ENCODE measurements at regions of chr3 and their contacts with region 1.

Region 1: GRCh38 chr3:115099986-115100571 is 47.0 kb downstream of the ZBTB20 start:
- DNase-seq: no peak
- H3K4me3 ChIP-seq: no peak overlapping the region
- H3K27ac ChIP-seq: no peak overlapping the region
- H3K4me1 ChIP-seq: peaks cover 0 to 4% (median 0%) of the 10 kb centered on the region in 4 experiments; a peak in 2 of 7 replicates
- H3K27me3 ChIP-seq: no peaks in the 10 kb centered on the region
- CTCF ChIP-seq: no peak
- EP300 ChIP-seq: no peak
- POLR2A ChIP-seq: no peak
- RAD21 ChIP-seq: no peak

Region 2: GRCh38 chr3:115085197-115085865 is 14.7 kb before region 1 on chr3:
- CTCF ChIA-PET with region 1: interaction called, 13 read pairs
- POLR2A ChIA-PET with region 1: no interaction called
- DNase-seq: no peak
- H3K4me3 ChIP-seq: no peak overlapping the region
- H3K27ac ChIP-seq: no peak overlapping the region
- H3K4me1 ChIP-seq: 0 out of 7 replicates have a peak, but pooled peaks cover 0 to 2% (median 0%) of the 10 kb centered on the region in 4 experiments
- H3K27me3 ChIP-seq: no peaks in the 10 kb centered on the region
- CTCF ChIP-seq: peak in 2 of 3 experiments; percentile 24 to 44; a peak in 2 of 4 replicates
- EP300 ChIP-seq: no peak
- POLR2A ChIP-seq: no peak
- RAD21 ChIP-seq: 0 out of 4 replicates have a peak, but pooled peaks of 1 of the 2 experiments have one; percentile 14

Region 3: DNA sequence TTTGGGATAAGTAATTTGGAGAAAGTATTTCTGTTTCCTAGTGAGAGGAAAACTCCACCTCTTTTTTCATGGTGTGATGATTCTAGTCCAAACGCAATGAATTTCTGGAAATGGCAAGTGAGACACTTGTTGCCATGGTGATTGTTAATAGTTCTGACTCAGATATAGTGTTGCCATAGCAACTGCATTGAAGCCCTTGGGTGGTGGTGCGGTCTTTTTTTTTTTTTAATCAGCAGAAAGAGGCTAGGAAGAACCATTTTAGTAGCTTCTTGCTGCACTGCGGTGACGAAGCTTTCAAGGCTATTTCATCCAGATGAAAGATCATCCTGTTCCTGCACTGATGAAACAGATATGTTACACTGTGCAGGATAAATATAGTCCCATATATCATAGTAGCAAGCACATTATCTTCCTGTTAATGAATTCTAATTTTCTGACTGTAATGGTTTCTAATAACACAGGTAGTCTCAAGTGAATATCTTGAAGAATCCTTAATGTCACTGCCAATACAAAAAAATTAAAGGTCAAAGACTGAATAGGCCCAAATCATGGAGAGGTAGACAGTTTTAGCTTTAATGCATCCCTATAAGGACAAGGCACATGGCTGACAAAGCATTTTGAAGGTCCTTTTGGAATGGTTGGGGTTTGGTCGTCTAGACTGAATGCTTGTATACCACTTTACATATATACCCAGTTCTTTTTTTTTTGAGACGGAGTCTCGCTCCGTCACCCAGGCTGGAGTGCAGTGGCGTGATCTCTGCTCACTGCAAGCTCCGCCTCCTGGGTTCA is 172.2 kb after region 1 on chr3:
- CTCF ChIA-PET with region 1: no interaction called
- POLR2A ChIA-PET with region 1: no interaction called
- DNase-seq: no peak
- H3K4me3 ChIP-seq: no peak overlapping the region
- H3K27ac ChIP-seq: no peak overlapping the region
- H3K4me1 ChIP-seq: no peaks in the 10 kb centered on the region
- H3K27me3 ChIP-seq: no peaks in the 10 kb centered on the region
- CTCF ChIP-seq: no peak
- EP300 ChIP-seq: no peak
- POLR2A ChIP-seq: no peak
- RAD21 ChIP-seq: no peak